Activated B cell treated with CpG ODN at 0.5 μM for 24 hours (primary cell): ENCODE measurements at regions of chr10 and their contacts with region 1.

Region 1: GRCh38 chr10:23438550-23439441 is at the start of gene OTUD1:
- DNase-seq: peak; percentile 99
- ATAC-seq: peak; percentile 80
- H3K4me3 Mint-ChIP-seq: peak within 1 kb of the TSS; percentile 85
- H3K27ac Mint-ChIP-seq: peak within 1 kb of the TSS; percentile 91
- H3K4me1 Mint-ChIP-seq: peaks cover 44% of the 10 kb centered on the region
- H3K27me3 Mint-ChIP-seq: no peaks in the 10 kb centered on the region
- CTCF ChIP-seq: no peak
- total RNA-seq, gene OTUD1: 18.7 and 21.0 TPM in 2 replicates

Region 2: GRCh38 chr10:21533467-21534279 is 1905.1 kb before region 1 on chr10 and contains the start of gene MLLT10:
- CTCF ChIA-PET with region 1: no interaction called
- POLR2A ChIA-PET with region 1: no interaction called
- intact Hi-C with region 1: loop called (anchors 2 kb)
- DNase-seq: peak; percentile 94
- ATAC-seq: peak; percentile 88
- H3K4me3 Mint-ChIP-seq: peak within 1 kb of the TSS; percentile 90
- H3K27ac Mint-ChIP-seq: peak within 1 kb of the TSS; percentile 92
- H3K4me1 Mint-ChIP-seq: peaks cover 18% of the 10 kb centered on the region
- H3K27me3 Mint-ChIP-seq: peaks cover 2% of the 10 kb centered on the region
- CTCF ChIP-seq: no peak
- total RNA-seq, gene MLLT10: 40.6 and 48.7 TPM in 2 replicates

Region 3: GRCh38 chr10:22228943-22229801 is 1209.6 kb before region 1 on chr10:
- CTCF ChIA-PET with region 1: no interaction called
- POLR2A ChIA-PET with region 1: interaction called, 3 read pairs
- intact Hi-C with region 1: loop called (anchors 1 kb)
- DNase-seq: peak; percentile 81
- ATAC-seq: peak; percentile 79
- H3K4me3 Mint-ChIP-seq: peak overlapping the region; percentile 88
- H3K27ac Mint-ChIP-seq: peak overlapping the region; percentile 96
- H3K4me1 Mint-ChIP-seq: peaks cover 15% of the 10 kb centered on the region
- H3K27me3 Mint-ChIP-seq: peaks cover 7% of the 10 kb centered on the region
- CTCF ChIP-seq: no peak

Region 4: GRCh38 chr10:22606164-22606614 is 832.6 kb before region 1 on chr10:
- CTCF ChIA-PET with region 1: no interaction called
- POLR2A ChIA-PET with region 1: interaction called, 5 read pairs
- intact Hi-C with region 1: loop called (anchors 10 kb)
- DNase-seq: no peak
- ATAC-seq: peak; percentile 75
- H3K4me3 Mint-ChIP-seq: peak overlapping the region; percentile 68
- H3K27ac Mint-ChIP-seq: peak overlapping the region; percentile 94
- H3K4me1 Mint-ChIP-seq: peaks cover 93% of the 10 kb centered on the region
- H3K27me3 Mint-ChIP-seq: no peaks in the 10 kb centered on the region
- CTCF ChIP-seq: no peak

Region 5: GRCh38 chr10:23253780-23254179 is 185.0 kb before region 1 on chr10:
- CTCF ChIA-PET with region 1: no interaction called
- POLR2A ChIA-PET with region 1: no interaction called
- intact Hi-C with region 1: no loop called
- DNase-seq: no peak
- ATAC-seq: no peak
- H3K4me3 Mint-ChIP-seq: no peak overlapping the region
- H3K27ac Mint-ChIP-seq: no peak overlapping the region
- H3K4me1 Mint-ChIP-seq: no peaks in the 10 kb centered on the region
- H3K27me3 Mint-ChIP-seq: peaks cover 3% of the 10 kb centered on the region
- CTCF ChIP-seq: no peak

Region 6: DNA sequence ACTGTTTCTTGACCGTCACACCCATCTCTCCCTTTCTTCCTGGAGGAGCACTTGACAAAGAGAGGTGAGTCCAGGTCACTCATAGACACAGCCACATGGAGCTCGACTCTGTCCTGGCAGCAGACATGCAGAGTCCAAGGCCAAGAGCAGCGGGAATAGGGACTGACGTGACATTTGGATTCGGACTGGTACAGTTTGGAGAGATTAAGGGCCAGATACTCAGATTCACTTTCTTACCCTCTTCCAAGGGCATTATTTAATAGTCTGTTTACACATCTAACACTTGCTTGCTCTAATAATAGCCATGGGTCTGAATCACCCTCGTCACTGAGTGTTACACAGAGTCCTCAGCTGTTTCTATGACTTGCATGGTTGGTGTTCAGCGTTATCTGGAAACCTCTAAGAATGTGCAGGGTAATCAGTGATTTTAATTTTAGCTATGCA is 39.1 kb before region 1 on chr10:
- CTCF ChIA-PET with region 1: no interaction called
- POLR2A ChIA-PET with region 1: no interaction called
- intact Hi-C with region 1: no loop called
- DNase-seq: no peak
- ATAC-seq: no peak
- H3K4me3 Mint-ChIP-seq: no peak overlapping the region
- H3K27ac Mint-ChIP-seq: no peak overlapping the region
- H3K4me1 Mint-ChIP-seq: no peaks in the 10 kb centered on the region
- H3K27me3 Mint-ChIP-seq: no peaks in the 10 kb centered on the region
- CTCF ChIP-seq: no peak

Region 7: GRCh38 chr10:23413629-23414089 is 25.1 kb before region 1 on chr10:
- CTCF ChIA-PET with region 1: no interaction called
- POLR2A ChIA-PET with region 1: interaction called, 3 read pairs
- intact Hi-C with region 1: loop called (anchors 2 kb)
- DNase-seq: no peak
- ATAC-seq: peak; percentile 76
- H3K4me3 Mint-ChIP-seq: peak overlapping the region; percentile 6
- H3K27ac Mint-ChIP-seq: peak overlapping the region; percentile 4
- H3K4me1 Mint-ChIP-seq: peaks cover 26% of the 10 kb centered on the region
- H3K27me3 Mint-ChIP-seq: no peaks in the 10 kb centered on the region
- CTCF ChIP-seq: no peak

Region 8: GRCh38 chr10:23525406-23525805 is 86.6 kb after region 1 on chr10:
- CTCF ChIA-PET with region 1: interaction called, 7 read pairs
- POLR2A ChIA-PET with region 1: interaction called, 5 read pairs
- intact Hi-C with region 1: loop called (anchors 1 kb)
- DNase-seq: no peak
- ATAC-seq: peak; percentile 75
- H3K4me3 Mint-ChIP-seq: no peak overlapping the region
- H3K27ac Mint-ChIP-seq: no peak overlapping the region
- H3K4me1 Mint-ChIP-seq: peaks cover 31% of the 10 kb centered on the region
- H3K27me3 Mint-ChIP-seq: no peaks in the 10 kb centered on the region
- CTCF ChIP-seq: no peak

Region 9: GRCh38 chr10:24882047-24882698 is 1443.4 kb after region 1 on chr10:
- CTCF ChIA-PET with region 1: no interaction called
- POLR2A ChIA-PET with region 1: no interaction called
- intact Hi-C with region 1: loop called (anchors 10 kb)
- DNase-seq: no peak
- ATAC-seq: peak; percentile 61
- H3K4me3 Mint-ChIP-seq: peak overlapping the region; percentile 21
- H3K27ac Mint-ChIP-seq: no peak overlapping the region
- H3K4me1 Mint-ChIP-seq: peaks cover 27% of the 10 kb centered on the region
- H3K27me3 Mint-ChIP-seq: no peaks in the 10 kb centered on the region
- CTCF ChIP-seq: no peak